ENCODE measurements at regions of chr9 and their contacts with region 1.

Region 1: DNA sequence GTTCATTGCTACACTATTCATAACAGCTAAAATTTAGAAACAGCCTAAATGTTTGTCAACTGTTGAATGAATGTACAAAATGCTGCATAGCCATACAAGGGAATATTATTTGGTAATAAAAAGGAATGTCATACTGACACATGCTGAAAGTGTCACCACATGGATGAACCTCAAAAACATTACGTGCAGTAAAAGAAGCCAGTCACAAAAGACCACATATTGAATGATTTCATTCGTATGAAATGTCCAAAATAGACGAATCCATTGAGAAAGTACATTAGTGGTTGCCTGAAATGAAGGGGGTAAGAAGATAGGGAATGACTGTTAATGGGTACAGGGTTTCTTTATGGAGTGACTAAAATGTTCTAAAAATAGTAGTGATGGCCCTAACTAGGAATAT is 11.6 kb upstream of the ECM2 start:
- DNase-seq: no peak
- ATAC-seq: no peak

Region 2: DNA sequence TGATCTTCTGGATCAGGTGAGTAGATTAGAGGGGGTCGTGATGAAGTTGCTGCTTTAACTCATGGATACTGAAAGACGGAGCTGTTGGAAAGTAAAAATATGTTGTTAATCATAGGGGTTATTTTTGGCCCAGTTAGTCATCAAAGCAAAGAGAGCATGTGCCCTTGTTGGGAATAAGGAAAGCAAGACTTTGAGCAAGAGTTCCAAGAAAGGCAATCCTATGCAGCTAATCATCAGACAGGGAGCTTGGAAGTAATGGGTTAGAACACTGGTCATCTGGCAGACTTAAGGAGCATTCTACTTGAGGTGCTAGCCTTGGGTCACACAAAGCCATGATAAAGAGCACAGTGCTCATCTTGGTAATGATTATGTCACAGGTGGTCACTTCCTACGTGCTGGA is 83.4 kb before region 1 on chr9:
- intact Hi-C with region 1: loop called in 1 of 2 experiments (anchors 10 kb)
- DNase-seq: no peak
- ATAC-seq: peak; percentile 78 to 92

Region 3: DNA sequence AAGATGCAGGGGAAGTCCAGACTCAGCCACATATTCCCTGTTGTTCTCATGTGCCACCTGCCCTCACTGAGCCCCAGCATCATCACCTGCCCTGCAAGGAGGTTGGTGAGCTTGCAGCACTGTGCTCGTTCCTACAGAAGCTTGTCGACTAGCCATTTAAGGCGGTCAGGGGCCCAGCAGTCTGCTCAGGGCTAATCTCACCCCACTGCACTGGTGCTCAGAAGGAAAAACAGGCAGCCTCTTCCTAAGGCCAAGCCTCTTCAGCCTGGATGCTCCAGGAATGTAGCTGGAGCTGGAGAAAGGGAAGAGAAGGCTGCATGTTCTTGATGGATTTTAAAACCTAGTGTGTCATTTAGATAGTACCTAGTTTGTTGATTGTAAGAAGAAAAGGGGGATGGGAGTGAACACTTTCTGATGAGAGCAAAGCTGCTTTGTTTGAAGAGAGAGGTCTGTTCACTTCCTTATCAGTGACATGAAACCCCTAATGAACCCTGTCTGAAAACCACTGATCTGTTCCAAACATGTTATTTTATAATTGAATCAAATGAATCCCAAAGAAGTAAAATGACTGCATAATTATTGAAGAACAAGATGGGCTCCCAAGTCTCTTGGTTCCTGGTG is 54.5 kb before region 1 on chr9:
- intact Hi-C with region 1: no loop called
- DNase-seq: no peak
- ATAC-seq: no peak

Region 4: DNA sequence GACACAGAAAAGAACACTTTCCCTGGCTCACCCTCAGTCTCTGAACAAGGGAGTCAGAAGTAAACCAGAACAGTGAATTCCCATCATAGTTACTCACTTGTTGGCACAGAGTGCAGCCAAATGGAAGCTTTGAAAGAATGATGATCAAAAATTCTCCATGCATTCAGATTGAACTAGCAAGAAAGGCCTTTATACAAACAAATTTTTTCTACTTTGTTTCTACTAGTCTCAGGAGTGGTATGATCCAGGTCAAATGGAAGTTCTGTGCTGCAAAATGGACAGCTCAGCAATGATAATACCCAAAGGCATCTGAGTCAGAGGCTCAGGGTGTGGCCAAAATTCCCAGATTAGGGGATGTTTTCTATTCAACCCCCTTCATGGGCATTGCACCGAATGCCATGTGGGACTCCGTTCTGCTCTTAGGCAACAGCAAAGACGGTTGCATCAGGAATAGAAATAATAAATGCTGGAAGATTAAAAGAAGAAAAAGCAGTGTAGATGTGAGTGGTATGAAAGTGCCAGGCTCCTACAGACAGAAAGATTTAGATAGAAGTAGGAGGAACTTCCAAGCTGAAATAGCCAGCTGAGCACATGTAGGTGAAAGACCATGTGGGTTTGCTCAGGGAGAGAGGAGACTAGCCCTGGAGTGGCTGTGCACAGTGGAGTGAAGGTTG is 41.0 kb before region 1 on chr9:
- intact Hi-C with region 1: no loop called
- DNase-seq: peak; percentile 57
- ATAC-seq: peak; percentile 74 to 92

Region 5: GRCh38 chr9:92517046-92517445 is 30.3 kb before region 1 on chr9:
- intact Hi-C with region 1: no loop called
- DNase-seq: no peak
- ATAC-seq: no peak